BJ (cell line): ENCODE measurements at regions of chr9 and their contacts with region 1.

Region 1: DNA sequence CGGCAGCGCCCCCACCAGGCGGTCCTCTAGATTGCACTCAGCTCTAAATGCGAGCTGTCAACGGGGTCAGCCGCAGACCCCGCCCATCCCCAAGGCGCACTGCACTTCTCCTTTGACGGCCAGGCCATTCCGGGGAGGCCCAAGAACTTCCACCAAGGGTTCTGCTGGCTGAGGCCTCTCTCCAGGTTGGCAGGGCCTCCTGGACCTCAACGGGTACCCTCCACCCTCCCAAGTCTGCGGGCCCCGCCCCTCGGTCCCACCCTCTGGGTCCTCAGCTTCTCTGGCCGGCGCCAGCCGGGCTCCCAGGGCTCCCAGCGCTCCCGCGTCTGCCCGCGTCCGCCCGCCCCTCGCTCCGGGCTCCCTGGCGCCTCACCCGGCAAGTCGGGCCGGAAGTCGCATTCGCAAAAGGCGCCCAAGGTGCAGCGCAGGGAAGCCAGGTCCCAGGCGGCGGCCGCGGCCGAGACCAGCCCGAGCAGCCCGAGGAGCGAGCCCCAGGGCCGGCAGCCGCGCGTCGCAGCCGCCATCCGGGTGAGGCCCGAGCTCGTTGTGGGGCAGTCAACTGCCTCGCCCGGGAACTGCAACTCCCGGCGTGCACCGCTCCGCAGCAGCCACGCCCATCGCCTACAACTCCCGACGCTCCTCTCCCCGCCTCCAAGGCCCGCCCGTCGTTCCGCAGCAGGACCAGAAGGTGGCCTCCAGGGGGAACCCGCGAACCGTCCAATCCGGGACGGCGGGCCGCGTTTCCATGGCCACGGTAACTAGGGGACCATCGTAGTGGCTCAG is at the start of gene TOR2A:
- DNase-seq: peak; percentile 75
- H3K4me3 ChIP-seq: peak within 1 kb of the TSS; percentile 55
- H3K27me3 ChIP-seq: peaks cover 6% of the 10 kb centered on the region
- CTCF ChIP-seq: peak; percentile 96
- polyA plus RNA-seq, gene TOR2A: 4.8 and 8.0 TPM in 2 replicates

Region 2: GRCh38 chr9:127598839-127599548 is 135.9 kb before region 1 on chr9:
- CTCF ChIA-PET with region 1: interaction called, 41 read pairs
- POLR2A ChIA-PET with region 1: no interaction called
- DNase-seq: no peak
- H3K4me3 ChIP-seq: no peak overlapping the region
- H3K27me3 ChIP-seq: no peaks in the 10 kb centered on the region
- CTCF ChIP-seq: no peak

Region 3: DNA sequence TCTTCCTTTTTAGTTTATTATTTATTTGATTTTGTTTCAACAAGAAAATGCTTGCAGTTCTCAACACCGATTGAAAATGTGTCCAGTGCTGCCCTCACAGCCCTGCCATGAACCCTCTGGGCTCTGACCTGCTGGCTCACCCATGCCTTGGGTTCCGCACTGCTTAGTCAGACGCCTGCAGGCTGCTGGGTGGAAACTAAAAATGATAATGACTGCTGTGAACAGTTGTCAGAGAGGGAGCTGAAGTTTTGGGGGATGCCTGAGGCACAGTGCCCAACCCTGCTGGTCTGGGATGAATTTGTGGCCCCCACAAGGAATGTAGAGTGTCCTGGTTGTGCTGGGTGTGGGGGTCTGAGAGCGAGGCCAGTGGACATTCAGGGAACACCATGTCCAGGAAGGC is 50.4 kb before region 1 on chr9:
- CTCF ChIA-PET with region 1: interaction called, 12 read pairs
- POLR2A ChIA-PET with region 1: no interaction called
- DNase-seq: no peak
- H3K4me3 ChIP-seq: no peak overlapping the region
- H3K27me3 ChIP-seq: no peaks in the 10 kb centered on the region
- CTCF ChIP-seq: 0 out of 2 replicates have a peak, but pooled peaks have one; percentile 6

Region 4: DNA sequence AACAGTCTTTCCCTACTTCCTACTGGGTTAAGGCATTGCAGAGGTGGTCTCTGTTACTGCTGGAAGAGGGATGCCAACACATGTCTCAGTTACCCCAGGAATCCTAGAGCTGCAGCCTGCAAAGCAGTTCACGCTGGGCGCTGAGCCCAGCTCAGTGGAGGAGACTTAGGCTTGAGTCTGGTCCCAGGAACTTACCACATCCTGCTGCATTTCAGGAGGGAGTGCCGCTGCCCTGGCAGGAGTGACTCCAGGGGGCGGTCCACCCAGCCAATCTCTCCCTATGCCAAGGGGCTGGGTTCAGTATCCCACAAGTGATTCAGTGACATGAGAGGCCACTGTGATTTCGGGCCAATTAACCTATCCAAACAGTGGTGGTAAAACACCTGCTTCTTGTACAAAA is 11.5 kb before region 1 on chr9:
- CTCF ChIA-PET with region 1: interaction called, 34 read pairs
- POLR2A ChIA-PET with region 1: no interaction called
- DNase-seq: no peak
- H3K4me3 ChIP-seq: no peak overlapping the region
- H3K27me3 ChIP-seq: no peaks in the 10 kb centered on the region
- CTCF ChIP-seq: no peak

Region 5: DNA sequence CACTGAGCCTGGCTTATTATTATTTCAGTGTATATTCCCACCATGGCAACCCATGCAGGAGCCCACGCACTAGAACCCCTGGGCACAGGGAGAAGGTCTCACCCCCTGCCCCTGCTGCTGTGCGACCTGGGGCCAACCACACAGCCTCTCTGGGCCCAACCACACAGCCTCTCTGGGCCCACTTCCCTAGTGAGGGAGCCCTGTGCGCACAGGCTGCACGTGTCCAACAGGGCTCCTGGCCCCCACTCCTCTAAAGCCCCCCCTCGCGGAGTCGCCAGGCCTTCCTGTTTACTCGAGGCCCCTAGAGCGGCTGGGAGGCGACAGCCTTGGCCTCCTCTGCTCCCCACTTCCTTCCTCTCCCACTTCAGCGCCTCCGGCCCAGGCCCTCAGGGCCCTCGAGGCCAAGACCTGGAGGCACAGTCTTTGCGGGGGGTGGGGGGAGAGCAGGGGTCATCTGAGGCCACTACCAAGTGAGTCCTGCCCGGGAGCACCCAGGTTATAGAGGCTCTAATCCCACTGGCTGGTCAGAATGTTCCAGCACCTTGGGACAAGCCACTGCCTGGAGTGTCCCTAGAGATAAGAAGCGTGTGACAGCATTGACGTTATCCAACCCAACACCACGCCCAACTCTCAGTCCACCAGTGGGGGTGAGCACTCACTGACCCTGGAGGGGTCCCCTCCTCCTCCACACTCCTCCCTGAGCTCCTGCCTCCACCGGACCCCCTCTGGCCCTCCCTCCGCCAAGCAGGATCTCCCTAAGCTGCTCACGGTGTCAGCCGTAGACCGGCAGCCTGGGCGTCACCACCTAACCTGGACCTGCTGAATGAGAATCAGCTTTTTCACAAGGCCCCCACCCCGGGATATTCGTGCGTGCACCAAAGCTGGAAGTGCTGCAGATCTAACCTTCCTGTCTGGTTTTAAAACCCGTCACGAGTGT is 127.4 kb after region 1 on chr9:
- CTCF ChIA-PET with region 1: interaction called, 11 read pairs
- POLR2A ChIA-PET with region 1: no interaction called
- DNase-seq: no peak
- H3K4me3 ChIP-seq: no peak overlapping the region
- H3K27me3 ChIP-seq: no peaks in the 10 kb centered on the region
- CTCF ChIP-seq: no peak